Activated B cell treated with CpG ODN at 0.5 μM for 24 hours (primary cell): ENCODE measurements at regions of chr16 and their contacts with region 1.

Region 1: GRCh38 chr16:11682655-11683096 is 14.4 kb downstream of the SNN start:
- DNase-seq: peak; percentile 9
- ATAC-seq: peak; percentile 22
- H3K4me3 Mint-ChIP-seq: peak overlapping the region; percentile 61
- H3K27ac Mint-ChIP-seq: peak overlapping the region; percentile 88
- H3K4me1 Mint-ChIP-seq: peaks cover 98% of the 10 kb centered on the region
- H3K27me3 Mint-ChIP-seq: no peaks in the 10 kb centered on the region
- CTCF ChIP-seq: no peak

Region 2: GRCh38 chr16:11667824-11668622 is 14.7 kb before region 1 on chr16 and contains the start of gene SNN:
- CTCF ChIA-PET with region 1: no interaction called
- POLR2A ChIA-PET with region 1: interaction called, 23 read pairs
- intact Hi-C with region 1: loop called (anchors 1 kb)
- DNase-seq: peak; percentile 86
- ATAC-seq: peak; percentile 79
- H3K4me3 Mint-ChIP-seq: peak within 1 kb of the TSS; percentile 90
- H3K27ac Mint-ChIP-seq: peak within 1 kb of the TSS; percentile 89
- H3K4me1 Mint-ChIP-seq: peaks cover 72% of the 10 kb centered on the region
- H3K27me3 Mint-ChIP-seq: no peaks in the 10 kb centered on the region
- CTCF ChIP-seq: no peak
- total RNA-seq, gene SNN: 31.9 and 32.1 TPM in 2 replicates